IMR-90 (cell line): ENCODE measurements at regions of chr7 and their contacts with region 1.

Region 1: DNA sequence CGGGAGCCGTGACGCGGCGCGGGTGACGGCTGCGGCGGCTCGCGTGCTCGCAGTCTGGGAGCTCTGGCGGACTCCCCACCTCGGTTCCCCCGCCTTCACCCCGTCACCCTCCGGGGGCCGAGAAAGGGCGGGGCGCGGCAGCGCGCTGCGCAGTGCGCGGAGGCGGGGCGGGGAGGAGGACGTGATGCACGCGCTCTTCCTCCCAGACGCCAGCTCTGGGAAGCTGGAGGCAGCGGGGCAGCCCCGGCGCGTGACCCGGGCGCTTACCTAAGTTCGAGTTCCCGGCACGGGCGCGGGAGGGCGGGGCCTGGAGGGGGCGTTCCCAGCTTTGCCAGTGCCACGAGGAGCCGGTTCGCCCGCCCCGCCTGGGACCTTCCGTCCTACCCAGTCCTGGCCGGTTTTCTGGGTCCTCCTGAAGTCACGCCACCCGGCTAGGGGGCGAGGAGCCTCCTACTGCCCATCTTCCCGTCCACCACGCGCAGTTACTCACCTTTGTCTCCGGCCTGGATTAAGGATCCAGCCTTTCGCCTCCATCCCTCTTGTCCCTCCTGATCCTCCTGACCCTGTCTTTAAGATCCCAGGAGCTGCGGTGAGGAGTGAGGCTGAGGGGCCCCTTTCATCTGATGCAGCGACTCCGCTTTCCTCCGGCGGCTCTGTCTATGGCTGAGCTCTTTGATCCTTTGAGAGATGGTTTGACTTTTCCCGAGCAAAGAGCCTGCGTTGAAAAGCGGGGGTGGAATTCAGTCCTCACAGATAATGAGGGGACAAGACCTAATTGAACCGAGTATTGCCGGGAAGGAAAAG is 470 bp upstream of the NAMPT start:
- DNase-seq: peak; percentile 97
- ATAC-seq: peak; percentile 96
- H3K4me3 ChIP-seq: peak overlapping the region; percentile 96
- H3K27ac ChIP-seq: peak overlapping the region; percentile 97
- H3K4me1 ChIP-seq: peaks cover 2% of the 10 kb centered on the region; the same call in 1 of the 2 replicates
- H3K27me3 ChIP-seq: no peaks in the 10 kb centered on the region
- CTCF ChIP-seq: no peak
- POLR2A ChIP-seq: peak; percentile 80
- RAD21 ChIP-seq: no peak

Region 2: GRCh38 chr7:106346678-106347217 is 61.5 kb after region 1 on chr7:
- CTCF ChIA-PET with region 1: no interaction called
- POLR2A ChIA-PET with region 1: interaction called, 5 read pairs
- dilution Hi-C with region 1: no loop called
- in situ Hi-C with region 1: no loop called
- intact Hi-C with region 1: loop called (anchors 2 kb)
- DNase-seq: peak; percentile 97
- ATAC-seq: peak; percentile 63
- H3K4me3 ChIP-seq: no peak overlapping the region
- H3K27ac ChIP-seq: no peak overlapping the region
- H3K4me1 ChIP-seq: peaks cover 3% of the 10 kb centered on the region; the same call in 1 of the 2 replicates
- H3K27me3 ChIP-seq: no peaks in the 10 kb centered on the region; the same call in 1 of the 2 replicates
- CTCF ChIP-seq: no peak
- POLR2A ChIP-seq: no peak
- RAD21 ChIP-seq: no peak

Region 3: DNA sequence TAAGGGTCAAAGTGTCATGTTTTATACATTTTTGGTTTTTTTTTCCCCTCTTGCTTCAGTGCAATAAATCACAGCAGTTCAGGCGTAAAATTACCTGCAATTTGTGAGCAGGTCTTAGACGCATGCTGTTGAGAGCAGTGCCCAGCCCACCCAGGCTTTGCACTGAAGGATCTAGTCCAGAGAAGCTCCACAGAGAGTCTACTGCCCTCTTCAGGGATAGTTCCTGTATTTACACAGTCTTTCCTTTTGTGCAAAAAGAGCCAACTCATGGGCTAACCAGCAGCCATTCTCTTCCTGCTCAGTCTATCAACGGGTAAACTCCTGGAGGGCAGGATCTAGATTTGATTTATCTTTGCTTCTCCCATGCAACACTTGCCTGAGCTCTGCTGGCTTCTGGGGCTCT is 81.8 kb after region 1 on chr7:
- CTCF ChIA-PET with region 1: no interaction called
- POLR2A ChIA-PET with region 1: no interaction called
- dilution Hi-C with region 1: no loop called
- in situ Hi-C with region 1: no loop called
- intact Hi-C with region 1: loop called (anchors 5 kb)
- DNase-seq: peak; percentile 22
- ATAC-seq: peak; percentile 73
- H3K4me3 ChIP-seq: no peak overlapping the region
- H3K27ac ChIP-seq: no peak overlapping the region
- H3K4me1 ChIP-seq: no peaks in the 10 kb centered on the region
- H3K27me3 ChIP-seq: no peaks in the 10 kb centered on the region; the same call in 1 of the 2 replicates
- CTCF ChIP-seq: peak; percentile 58
- POLR2A ChIP-seq: no peak
- RAD21 ChIP-seq: peak; percentile 56

Region 4: GRCh38 chr7:106425017-106425719 is 139.9 kb after region 1 on chr7:
- CTCF ChIA-PET with region 1: no interaction called
- POLR2A ChIA-PET with region 1: no interaction called
- dilution Hi-C with region 1: no loop called
- in situ Hi-C with region 1: no loop called
- intact Hi-C with region 1: loop called (anchors 2 kb)
- DNase-seq: peak; percentile 100
- ATAC-seq: peak; percentile 73
- H3K4me3 ChIP-seq: no peak overlapping the region
- H3K27ac ChIP-seq: peak overlapping the region; percentile 79
- H3K4me1 ChIP-seq: peaks cover 24% of the 10 kb centered on the region
- H3K27me3 ChIP-seq: no peaks in the 10 kb centered on the region
- CTCF ChIP-seq: no peak
- POLR2A ChIP-seq: no peak; the same call in 1 of the 2 replicates
- RAD21 ChIP-seq: peak; percentile 16

Region 5: GRCh38 chr7:106461993-106462859 is 177.0 kb after region 1 on chr7:
- CTCF ChIA-PET with region 1: interaction called, 9 read pairs
- POLR2A ChIA-PET with region 1: no interaction called
- dilution Hi-C with region 1: no loop called
- in situ Hi-C with region 1: no loop called
- intact Hi-C with region 1: loop called (anchors 1 kb)
- DNase-seq: peak; percentile 52
- ATAC-seq: peak; percentile 64
- H3K4me3 ChIP-seq: no peak overlapping the region
- H3K27ac ChIP-seq: no peak overlapping the region
- H3K4me1 ChIP-seq: no peaks in the 10 kb centered on the region
- H3K27me3 ChIP-seq: no peaks in the 10 kb centered on the region
- CTCF ChIP-seq: peak; percentile 60
- POLR2A ChIP-seq: no peak
- RAD21 ChIP-seq: peak; percentile 61

Region 6: DNA sequence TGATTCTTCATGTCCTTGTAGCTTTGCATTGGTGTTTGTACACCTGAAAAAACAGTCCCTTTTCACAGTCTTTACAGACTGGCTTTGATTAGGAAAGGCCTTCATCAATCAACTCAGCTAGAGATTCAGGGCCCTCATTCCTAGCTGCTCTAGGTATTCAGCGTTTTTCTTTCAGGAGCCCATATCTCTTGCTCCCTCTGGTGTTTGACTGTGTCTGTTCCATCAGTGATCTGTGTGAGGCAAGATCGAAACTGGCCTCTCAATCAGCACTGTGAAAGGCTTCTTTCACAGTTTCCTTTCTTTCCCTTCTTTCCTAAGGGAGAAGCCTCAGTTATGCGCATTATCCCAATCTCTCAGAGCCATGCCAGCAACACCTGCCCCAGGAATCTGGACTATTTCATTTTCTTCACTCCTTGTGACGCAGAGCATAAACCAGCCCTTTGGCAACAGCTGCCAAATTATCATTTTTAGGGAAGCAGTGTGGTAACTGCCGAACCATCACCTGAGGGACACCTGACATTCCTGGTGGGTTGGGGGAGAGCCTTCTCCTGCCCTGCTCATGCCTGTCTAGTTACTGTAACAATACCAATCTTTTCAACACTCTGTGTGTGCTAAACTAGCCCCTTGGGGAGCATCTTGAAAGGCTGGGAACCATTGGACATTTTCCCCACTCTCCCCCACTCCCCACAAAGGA is 451.4 kb after region 1 on chr7:
- CTCF ChIA-PET with region 1: no interaction called
- POLR2A ChIA-PET with region 1: no interaction called
- dilution Hi-C with region 1: no loop called
- in situ Hi-C with region 1: no loop called
- intact Hi-C with region 1: loop called (anchors 1 kb)
- DNase-seq: peak; percentile 83
- ATAC-seq: peak; percentile 95
- H3K4me3 ChIP-seq: no peak overlapping the region; the same call in 1 of the 2 replicates
- H3K27ac ChIP-seq: peak overlapping the region; percentile 77
- H3K4me1 ChIP-seq: peaks cover 5% of the 10 kb centered on the region
- H3K27me3 ChIP-seq: no peaks in the 10 kb centered on the region
- CTCF ChIP-seq: peak; percentile 82
- POLR2A ChIP-seq: no peak
- RAD21 ChIP-seq: peak; percentile 89